ENCODE measurements at regions of chr4 and their contacts with region 1.

Region 1: DNA sequence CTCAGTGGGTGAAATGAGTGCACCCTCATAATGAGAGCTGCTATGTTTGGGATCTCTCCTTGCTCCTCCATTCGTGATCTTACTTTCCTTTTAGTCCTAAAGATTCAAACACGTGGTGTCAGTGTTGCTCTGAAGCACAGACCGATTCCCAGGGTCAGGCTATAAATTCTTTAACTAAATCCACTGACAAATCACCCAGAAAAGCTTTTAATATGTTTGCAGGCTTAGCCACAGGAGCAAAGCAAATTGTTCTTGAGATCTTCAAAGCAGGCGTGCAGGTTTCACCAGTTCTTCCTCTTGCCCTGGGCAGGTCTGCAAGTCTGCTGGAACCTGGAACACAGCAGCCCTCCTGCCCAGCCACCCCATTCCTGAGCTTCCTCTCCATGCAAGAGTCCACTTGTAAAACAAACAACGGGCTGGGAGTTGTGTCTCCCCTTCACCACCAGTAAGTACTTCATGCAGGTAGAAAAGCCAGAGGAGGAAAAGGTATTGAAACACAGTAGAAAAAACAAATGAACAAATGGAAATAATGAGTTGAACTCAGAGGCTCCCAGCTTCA is 70.1 kb upstream of the ENPP6 start:
- DNase-seq: no peak
- H3K4me3 Mint-ChIP-seq: peak overlapping the region; percentile 12
- H3K27ac Mint-ChIP-seq: peak overlapping the region; percentile 13
- H3K4me1 Mint-ChIP-seq: peaks cover 53% of the 10 kb centered on the region
- H3K27me3 Mint-ChIP-seq: no peaks in the 10 kb centered on the region

Region 2: DNA sequence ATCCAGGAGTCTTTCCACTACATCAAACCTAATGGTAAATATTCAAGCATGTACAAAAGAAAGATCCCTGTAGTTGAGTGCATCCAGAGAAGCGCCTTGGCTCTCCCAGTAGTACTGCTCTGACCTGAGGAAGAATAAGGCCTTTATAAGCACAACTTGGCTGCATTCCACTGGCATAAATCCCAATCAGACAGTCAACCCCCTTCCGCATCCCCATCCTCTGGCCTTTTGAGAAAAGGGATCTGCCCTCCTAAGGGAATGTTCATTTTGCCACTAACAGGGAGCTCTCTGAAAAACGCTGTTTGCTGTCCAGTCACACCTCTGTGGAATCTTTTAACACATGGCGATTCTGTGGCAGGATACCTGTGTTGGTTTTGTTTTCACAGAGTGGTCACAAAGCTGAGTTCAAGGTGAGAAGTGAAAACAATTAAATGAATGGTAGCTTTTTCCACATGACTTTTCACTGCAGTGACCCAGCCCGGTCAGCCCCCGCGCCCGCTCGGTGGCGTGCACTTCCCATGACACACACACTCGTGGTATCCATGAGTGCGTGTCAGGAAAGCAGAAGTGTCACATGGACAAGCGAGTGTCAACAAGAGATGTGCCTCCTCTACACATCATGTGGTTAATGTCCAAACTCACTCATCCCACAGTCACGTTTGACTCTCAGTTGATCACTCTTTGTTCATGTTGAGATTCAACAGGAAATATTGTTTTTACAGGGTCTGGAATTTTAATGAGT is 42.1 kb after region 1 on chr4:
- intact Hi-C with region 1: loop called (anchors 2 kb)
- DNase-seq: no peak
- H3K4me3 Mint-ChIP-seq: no peak overlapping the region
- H3K27ac Mint-ChIP-seq: peak overlapping the region; percentile 59
- H3K4me1 Mint-ChIP-seq: peaks cover 60% of the 10 kb centered on the region
- H3K27me3 Mint-ChIP-seq: no peaks in the 10 kb centered on the region

Region 3: DNA sequence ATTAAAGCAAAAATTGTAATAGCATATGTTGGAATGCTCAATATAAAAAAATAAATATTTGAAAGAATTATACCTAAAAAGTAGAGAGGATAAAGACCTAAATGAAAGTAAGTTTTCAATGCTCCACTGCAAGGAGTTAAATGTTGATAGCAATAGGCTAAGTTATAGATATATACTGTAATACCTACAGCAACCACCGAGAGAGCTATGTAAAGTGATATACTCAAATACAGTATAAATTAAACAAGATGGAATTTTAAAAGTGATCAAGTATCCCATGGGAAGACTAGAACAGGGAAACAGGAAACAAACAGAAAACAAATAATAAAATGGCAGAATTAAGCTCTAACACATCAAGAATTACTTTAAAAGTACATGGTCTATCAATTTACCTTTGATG is 287.5 kb after region 1 on chr4:
- intact Hi-C with region 1: loop called (anchors 1 kb)
- DNase-seq: no peak
- H3K4me3 Mint-ChIP-seq: no peak overlapping the region
- H3K27ac Mint-ChIP-seq: peak overlapping the region; percentile 55
- H3K4me1 Mint-ChIP-seq: peaks cover 19% of the 10 kb centered on the region
- H3K27me3 Mint-ChIP-seq: no peaks in the 10 kb centered on the region